AG04449 (cell line): ENCODE measurements at regions of chr12 and their contacts with region 1.

Region 1: GRCh38 chr12:49232940-49233841 is 31.7 kb upstream of the TUBA1C start:
- DNase-seq: no peak
- H3K4me3 ChIP-seq: peak overlapping the region; percentile 1
- CTCF ChIP-seq: peak; percentile 16

Region 2: GRCh38 chr12:48851883-48852733 is 381.1 kb before region 1 on chr12 and contains the start of gene DDX23:
- CTCF ChIA-PET with region 1: no interaction called
- POLR2A ChIA-PET with region 1: no interaction called
- DNase-seq: peak; percentile 83
- H3K4me3 ChIP-seq: peak within 1 kb of the TSS; percentile 97
- CTCF ChIP-seq: no peak

Region 3: DNA sequence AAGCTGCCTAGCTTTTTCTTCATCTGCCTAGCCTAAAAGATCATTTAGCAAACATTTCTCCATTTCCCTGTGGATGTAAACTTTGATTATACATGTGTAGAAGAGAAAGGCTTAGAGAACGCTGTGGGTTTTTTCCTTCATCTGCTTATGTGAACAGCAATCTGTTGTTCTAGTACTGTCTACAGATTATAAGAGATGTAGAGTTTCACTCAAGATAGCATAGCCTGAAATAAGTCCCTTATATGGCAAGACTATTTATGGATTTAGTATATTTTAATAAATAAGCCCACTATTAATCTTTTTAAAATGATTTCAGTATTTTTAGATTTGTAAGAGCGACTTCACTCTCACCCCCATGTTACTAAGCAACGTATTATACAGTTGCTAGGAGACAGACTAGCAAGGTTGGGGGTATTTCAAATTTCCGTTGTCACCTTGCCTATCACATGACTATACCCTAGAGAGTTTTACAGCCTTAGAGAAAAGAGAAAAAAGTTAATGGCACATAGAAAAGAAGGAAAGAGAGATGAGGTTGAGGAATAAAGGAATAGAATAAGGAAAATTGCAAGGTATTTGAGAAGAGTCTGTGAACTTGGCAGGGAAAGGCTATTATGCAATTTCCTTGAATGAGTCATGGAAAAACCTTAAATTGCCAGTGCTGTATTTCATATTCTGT is 32.1 kb before region 1 on chr12:
- CTCF ChIA-PET with region 1: interaction called, 26 read pairs
- POLR2A ChIA-PET with region 1: no interaction called
- DNase-seq: no peak
- H3K4me3 ChIP-seq: no peak overlapping the region
- CTCF ChIP-seq: no peak